Breast epithelium (tissue), 4 donors: ENCODE measurements at regions of chr6 and their contacts with region 1.

Region 1: GRCh38 chr6:88477413-88477812 is 311.3 kb upstream of the CNR1 start:
- DNase-seq: no peak
- H3K4me3 ChIP-seq: no peak overlapping the region
- H3K27ac ChIP-seq: no peak overlapping the region
- H3K4me1 ChIP-seq: no peaks in the 10 kb centered on the region
- H3K27me3 ChIP-seq: no peaks in the 10 kb centered on the region
- CTCF ChIP-seq: no peak
- POLR2A ChIP-seq: no peak

Region 2: GRCh38 chr6:86888301-86888700 is 1589.1 kb before region 1 on chr6:
- intact Hi-C with region 1: no loop called
- DNase-seq: no peak
- H3K4me3 ChIP-seq: no peak overlapping the region
- H3K27ac ChIP-seq: no peak overlapping the region
- H3K4me1 ChIP-seq: no peaks in the 10 kb centered on the region
- H3K27me3 ChIP-seq: no peaks in the 10 kb centered on the region
- CTCF ChIP-seq: no peak
- POLR2A ChIP-seq: no peak

Region 3: DNA sequence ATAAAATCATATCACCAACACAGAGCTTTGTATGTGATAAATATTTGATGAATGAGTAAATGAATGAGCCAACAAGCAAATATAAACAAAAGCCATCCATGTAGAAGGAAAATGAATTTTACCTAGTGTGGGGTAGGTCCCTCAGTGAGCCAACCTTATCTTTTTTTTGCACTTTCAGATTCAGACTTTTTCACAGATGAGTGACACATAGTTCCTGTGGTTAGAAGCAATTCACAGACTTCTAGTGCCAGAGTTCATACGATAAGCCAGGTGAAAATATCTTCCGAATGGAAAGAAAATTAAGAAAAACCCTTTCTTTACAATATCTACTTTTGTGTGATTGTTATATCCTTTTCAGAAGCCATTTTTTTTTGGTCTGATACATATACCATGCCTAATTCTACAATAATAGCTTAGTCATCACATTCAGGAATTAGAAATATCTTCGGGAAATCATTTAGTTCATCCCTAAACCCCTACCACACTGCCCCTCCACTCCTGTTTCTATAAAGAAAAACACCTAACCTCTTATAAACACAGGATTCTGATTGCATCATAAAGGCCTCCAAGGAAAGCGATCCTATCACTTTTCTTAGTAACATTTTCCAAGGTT is 228.6 kb before region 1 on chr6:
- intact Hi-C with region 1: no loop called
- DNase-seq: no peak
- H3K4me3 ChIP-seq: no peak overlapping the region
- H3K27ac ChIP-seq: no peak overlapping the region
- H3K4me1 ChIP-seq: no peaks in the 10 kb centered on the region
- H3K27me3 ChIP-seq: no peaks in the 10 kb centered on the region
- CTCF ChIP-seq: no peak
- POLR2A ChIP-seq: no peak

Region 4: GRCh38 chr6:88287696-88288095 is 189.7 kb before region 1 on chr6:
- intact Hi-C with region 1: no loop called
- DNase-seq: no peak
- H3K4me3 ChIP-seq: no peak overlapping the region
- H3K27ac ChIP-seq: no peak overlapping the region
- H3K4me1 ChIP-seq: no peaks in the 10 kb centered on the region
- H3K27me3 ChIP-seq: no peaks in the 10 kb centered on the region
- CTCF ChIP-seq: no peak
- POLR2A ChIP-seq: no peak

Region 5: GRCh38 chr6:88490908-88491264 is 13.5 kb after region 1 on chr6:
- intact Hi-C with region 1: loop called (anchors 1 kb)
- DNase-seq: no peak
- H3K4me3 ChIP-seq: no peak overlapping the region
- H3K27ac ChIP-seq: peak overlapping the region in 1 of 2 donors; percentile 48
- H3K4me1 ChIP-seq: no peaks in the 10 kb centered on the region
- H3K27me3 ChIP-seq: no peaks in the 10 kb centered on the region
- CTCF ChIP-seq: no peak
- POLR2A ChIP-seq: no peak